HepG2 (cell line): ENCODE measurements at regions of chr7 and their contacts with region 1.

Region 1: DNA sequence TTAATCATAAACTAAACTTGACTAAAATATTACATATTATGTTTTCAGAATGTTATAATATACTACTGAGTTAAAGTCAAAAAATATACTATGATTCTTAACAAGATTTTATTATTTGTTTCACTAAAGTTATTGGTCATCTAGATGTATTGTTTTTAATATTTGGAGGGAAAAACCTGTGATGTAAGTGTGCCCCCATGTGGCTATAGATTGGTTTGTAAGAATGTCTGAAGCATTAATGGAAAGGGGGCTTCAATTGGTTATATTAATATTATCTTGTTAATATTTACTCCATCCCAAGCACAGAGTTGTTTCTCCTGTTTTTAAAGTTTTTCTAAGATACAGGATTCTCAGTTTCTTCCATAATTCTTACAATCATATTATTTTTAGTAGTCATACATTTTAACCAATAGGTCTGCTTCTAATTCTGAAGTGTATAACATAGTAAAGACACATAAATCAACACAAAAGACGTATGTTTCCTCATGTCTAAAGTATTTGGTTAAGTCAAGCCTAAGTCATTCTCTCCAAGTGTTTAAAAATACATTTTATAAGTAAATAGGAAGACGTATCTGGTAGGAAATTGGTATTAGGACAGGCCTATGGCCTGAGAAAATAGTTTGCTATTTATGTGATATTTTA is 58.0 kb downstream of the GNAT3 start:
- DNase-seq: peak; percentile 12
- ATAC-seq: no peak
- H3K4me3 ChIP-seq: no peak overlapping the region
- H3K27ac ChIP-seq: no peak overlapping the region
- H3K4me1 ChIP-seq: peaks cover 24% of the 10 kb centered on the region
- H3K27me3 ChIP-seq: no peaks in the 10 kb centered on the region
- CTCF ChIP-seq: peak; percentile 55
- EP300 ChIP-seq: no peak
- POLR2A ChIP-seq: no peak
- RAD21 ChIP-seq: no peak

Region 2: GRCh38 chr7:80640846-80641245 is 187.0 kb after region 1 on chr7:
- CTCF ChIA-PET with region 1: no interaction called
- POLR2A ChIA-PET with region 1: no interaction called
- in situ Hi-C with region 1: no loop called
- intact Hi-C with region 1: no loop called
- DNase-seq: no peak
- ATAC-seq: no peak
- H3K4me3 ChIP-seq: no peak overlapping the region
- H3K27ac ChIP-seq: no peak overlapping the region
- H3K4me1 ChIP-seq: peaks cover 35% of the 10 kb centered on the region
- H3K27me3 ChIP-seq: no peaks in the 10 kb centered on the region
- CTCF ChIP-seq: no peak
- EP300 ChIP-seq: no peak
- POLR2A ChIP-seq: no peak
- RAD21 ChIP-seq: no peak

Region 3: DNA sequence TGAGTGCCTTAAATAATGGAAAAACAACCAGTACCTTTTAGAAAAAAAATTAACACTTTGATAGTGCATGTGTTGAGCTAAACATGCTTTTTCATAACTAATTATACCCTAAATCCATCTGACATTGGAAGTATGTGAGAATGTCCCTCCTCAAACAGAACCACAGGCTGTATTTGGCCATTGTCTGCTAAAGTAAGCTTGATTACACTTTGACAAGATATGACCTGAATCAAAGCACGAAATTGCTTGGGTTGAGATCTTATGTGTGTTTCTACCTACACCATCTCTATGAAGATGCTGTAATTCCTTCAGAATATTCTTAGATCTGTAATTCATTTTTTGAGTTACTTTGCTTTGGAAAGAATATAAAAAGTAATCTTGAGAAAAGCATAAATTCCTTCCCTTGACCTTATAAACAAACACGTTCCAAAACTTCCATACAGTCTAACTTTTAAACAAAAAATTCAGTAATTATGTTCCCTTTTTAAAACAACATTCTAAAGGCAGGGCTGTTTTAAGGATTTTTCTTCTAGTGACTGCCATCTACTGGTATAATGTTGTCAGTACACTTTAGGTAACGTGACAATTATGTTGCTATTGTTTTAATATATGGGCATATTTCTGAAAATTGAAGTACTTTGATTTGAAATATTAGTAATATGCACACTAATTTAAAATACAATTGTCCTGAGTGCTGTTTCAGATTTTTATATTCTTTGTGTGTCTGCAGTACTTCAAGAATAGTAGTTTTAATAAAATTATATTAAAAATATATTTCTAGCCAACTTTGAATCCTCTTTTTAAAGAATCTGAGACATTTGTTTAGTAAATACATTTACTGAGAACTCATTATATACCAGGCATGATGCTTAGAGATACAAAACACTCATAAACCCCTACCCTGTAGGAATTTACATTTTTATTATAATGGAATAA is 205.6 kb after region 1 on chr7:
- CTCF ChIA-PET with region 1: no interaction called
- POLR2A ChIA-PET with region 1: no interaction called
- in situ Hi-C with region 1: no loop called
- intact Hi-C with region 1: loop called (anchors 1 kb)
- DNase-seq: peak; percentile 26
- ATAC-seq: no peak; the same call in 2 of the 3 replicates
- H3K4me3 ChIP-seq: no peak overlapping the region
- H3K27ac ChIP-seq: no peak overlapping the region
- H3K4me1 ChIP-seq: peaks cover 22% of the 10 kb centered on the region
- H3K27me3 ChIP-seq: no peaks in the 10 kb centered on the region
- CTCF ChIP-seq: peak; percentile 60
- EP300 ChIP-seq: no peak
- POLR2A ChIP-seq: no peak
- RAD21 ChIP-seq: no peak